ENCODE measurements at regions of chr7 and their contacts with region 1.

Region 1: DNA sequence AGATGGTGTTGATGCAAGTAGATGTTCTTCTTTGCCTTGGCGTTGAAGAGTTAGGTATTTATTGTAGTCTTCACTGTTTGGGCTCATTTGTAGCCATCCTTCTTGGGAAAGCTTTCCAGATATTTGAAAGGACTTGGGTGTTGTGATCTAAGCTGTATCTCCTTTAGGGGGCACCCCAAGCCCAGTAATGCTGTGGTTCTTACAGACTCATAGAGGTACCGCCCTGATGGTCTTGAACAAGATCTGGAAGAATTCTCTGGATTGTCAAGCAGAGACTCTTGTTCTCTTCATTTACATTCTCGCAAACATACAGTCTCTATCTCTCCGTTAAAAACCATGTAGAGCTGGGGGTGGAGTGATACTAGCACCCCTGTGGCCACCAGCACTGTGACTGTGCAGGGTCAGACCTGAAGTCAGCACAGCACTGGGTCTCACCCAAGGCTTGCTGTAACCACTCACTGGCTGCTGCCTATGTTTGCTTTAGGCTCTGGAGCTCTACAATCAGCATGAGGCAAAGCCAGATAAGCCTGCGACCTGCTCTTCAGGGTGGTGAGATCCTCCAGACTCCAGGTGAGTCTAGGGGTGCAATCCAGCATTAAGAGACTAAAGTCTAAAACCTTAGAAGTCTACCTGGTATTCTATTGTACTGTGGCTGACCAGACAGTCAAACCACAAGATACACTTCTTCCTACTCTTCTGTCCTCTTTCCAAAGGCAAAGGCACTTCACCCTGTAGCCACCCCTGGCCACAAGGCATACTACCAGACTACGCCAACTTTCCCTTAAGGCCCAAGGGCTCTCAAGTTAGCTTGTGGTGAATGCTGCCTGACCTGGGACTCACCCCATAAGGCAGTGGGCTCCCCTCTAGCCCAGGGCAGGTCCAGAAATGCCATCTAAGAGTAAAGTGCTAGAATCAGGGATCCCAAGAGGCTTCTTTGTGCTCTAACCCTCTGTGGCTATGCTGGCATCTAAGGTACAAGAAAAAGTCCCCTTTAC is 209.7 kb upstream of the TMEM196 start:
- DNase-seq: no peak
- H3K4me3 ChIP-seq: no peak overlapping the region
- H3K27ac ChIP-seq: no peak overlapping the region
- H3K4me1 ChIP-seq: no peaks in the 10 kb centered on the region
- H3K27me3 ChIP-seq: no peaks in the 10 kb centered on the region
- CTCF ChIP-seq: peak in 2 of 3 experiments; percentile 10 to 12

Region 2: DNA sequence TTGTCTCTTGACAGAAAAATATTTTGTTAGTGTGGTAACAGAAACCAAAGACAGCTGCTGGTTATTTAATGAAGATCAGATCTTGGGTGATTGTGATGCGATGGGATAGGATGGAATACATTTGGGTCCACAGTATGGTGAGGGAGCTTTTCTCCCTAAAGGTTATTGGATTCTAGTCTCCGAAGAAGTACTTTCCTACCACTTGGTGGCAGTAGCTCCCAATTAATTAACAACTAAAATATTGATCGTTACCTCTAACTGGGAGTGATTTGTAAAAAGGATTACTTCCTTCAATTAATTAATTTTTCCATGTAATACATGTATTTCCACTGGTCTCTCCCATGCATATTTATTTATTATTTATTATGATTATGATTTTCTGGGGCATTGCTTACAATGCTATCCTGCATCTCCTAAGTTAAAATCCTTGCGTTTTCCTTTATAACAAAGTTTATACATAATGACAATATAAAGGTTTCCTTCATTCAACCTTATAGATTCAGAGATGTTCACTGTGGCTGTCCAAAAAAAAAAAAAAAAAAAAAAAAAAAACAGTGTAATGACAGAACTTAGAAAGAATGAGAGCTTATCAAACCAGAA is 235.3 kb before region 1 on chr7:
- intact Hi-C with region 1: no loop called
- DNase-seq: no peak
- H3K4me3 ChIP-seq: no peak overlapping the region
- H3K27ac ChIP-seq: no peak overlapping the region
- H3K4me1 ChIP-seq: no peaks in the 10 kb centered on the region
- H3K27me3 ChIP-seq: no peaks in the 10 kb centered on the region
- CTCF ChIP-seq: peak; percentile 11 to 37 (median 23)

Region 3: GRCh38 chr7:20030915-20031362 is 47.8 kb after region 1 on chr7:
- intact Hi-C with region 1: no loop called
- DNase-seq: no peak
- H3K4me3 ChIP-seq: no peak overlapping the region
- H3K27ac ChIP-seq: no peak overlapping the region
- H3K4me1 ChIP-seq: no peaks in the 10 kb centered on the region
- H3K27me3 ChIP-seq: no peaks in the 10 kb centered on the region
- CTCF ChIP-seq: no peak

Region 4: GRCh38 chr7:20172736-20173334 is 189.7 kb after region 1 on chr7:
- intact Hi-C with region 1: loop called (anchors 10 kb)
- DNase-seq: peak in 1 of 2 donors; percentile 65
- H3K4me3 ChIP-seq: no peak overlapping the region
- H3K27ac ChIP-seq: no peak overlapping the region
- H3K4me1 ChIP-seq: no peaks in the 10 kb centered on the region
- H3K27me3 ChIP-seq: no peaks in the 10 kb centered on the region
- CTCF ChIP-seq: peak in 2 of 3 experiments; percentile 14 to 27

Region 5: DNA sequence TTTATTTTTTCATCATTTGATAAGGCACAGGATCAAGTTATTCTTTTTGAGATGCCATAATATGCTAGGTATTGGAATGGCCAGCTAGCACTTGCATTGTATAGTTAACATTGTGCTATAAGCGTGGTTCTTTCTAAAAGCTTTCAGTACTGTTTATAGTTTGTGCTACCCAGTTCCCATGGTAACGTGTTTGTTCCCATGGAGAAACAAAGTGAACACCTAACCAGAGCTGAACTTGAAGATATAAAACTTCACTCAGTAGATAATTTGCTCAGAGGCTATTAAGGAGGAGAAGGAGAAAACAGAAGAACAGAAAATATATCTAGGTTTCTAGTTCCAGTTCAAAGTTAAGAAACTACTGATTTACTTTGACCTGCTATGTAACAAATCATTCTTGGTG is 324.0 kb after region 1 on chr7:
- intact Hi-C with region 1: loop called (anchors 10 kb)
- DNase-seq: no peak
- H3K4me3 ChIP-seq: no peak overlapping the region
- H3K27ac ChIP-seq: no peak overlapping the region
- H3K4me1 ChIP-seq: no peaks in the 10 kb centered on the region
- H3K27me3 ChIP-seq: no peaks in the 10 kb centered on the region
- CTCF ChIP-seq: no peak